WTC11 (cell line): ENCODE measurements at regions of chr18 and their contacts with region 1.

Region 1: GRCh38 chr18:9403795-9404564 is 69.4 kb downstream of the TWSG1 start:
- DNase-seq: peak; percentile 61
- ATAC-seq: peak; percentile 97
- H3K4me3 Mint-ChIP-seq: no peak overlapping the region
- H3K27ac Mint-ChIP-seq: no peak overlapping the region; the same call in 1 of the 2 replicates
- H3K4me1 Mint-ChIP-seq: no peaks in the 10 kb centered on the region
- H3K27me3 Mint-ChIP-seq: no peaks in the 10 kb centered on the region
- CTCF ChIP-seq: peak; percentile 24; the same call in 1 of the 2 replicates

Region 2: DNA sequence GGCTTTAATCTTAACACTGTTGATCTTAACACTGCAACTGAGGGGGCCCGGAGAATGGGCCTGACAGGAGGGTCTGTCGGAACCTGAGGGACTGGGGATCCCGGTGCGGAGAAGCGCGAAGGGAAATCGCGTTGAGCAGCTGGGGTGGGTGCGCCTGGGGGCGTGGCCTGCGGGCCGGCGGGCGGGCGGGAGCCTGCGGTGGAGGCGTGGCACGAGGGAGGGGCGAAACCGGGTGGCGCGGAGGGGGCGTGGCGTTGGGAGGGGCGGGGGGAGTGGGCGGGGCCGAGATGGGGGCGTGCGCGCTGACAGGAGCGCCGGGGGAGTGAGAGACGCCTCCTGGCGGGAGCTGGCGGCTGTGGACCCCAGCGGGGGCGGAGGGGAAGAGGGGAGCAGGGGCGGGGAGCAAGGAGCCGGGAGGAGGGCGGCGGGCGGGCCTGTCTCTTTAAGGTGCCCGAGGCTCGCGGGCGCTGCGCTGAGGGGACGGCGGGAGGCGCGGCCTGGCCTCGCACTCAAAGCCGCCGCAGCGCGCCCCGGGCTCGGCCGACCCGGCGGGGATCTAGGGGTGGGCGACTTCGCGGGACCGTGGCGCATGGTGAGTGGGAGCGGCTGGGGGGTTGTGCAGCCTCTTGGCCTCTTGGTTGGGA is 69.5 kb before region 1 on chr18 and contains the start of gene TWSG1:
- CTCF ChIA-PET with region 1: interaction called, 22 read pairs
- POLR2A ChIA-PET with region 1: interaction called, 5 read pairs
- DNase-seq: peak; percentile 96
- ATAC-seq: peak; percentile 92
- H3K4me3 Mint-ChIP-seq: peak within 1 kb of the TSS; percentile 86
- H3K27ac Mint-ChIP-seq: peak within 1 kb of the TSS; percentile 94
- H3K4me1 Mint-ChIP-seq: peaks cover 10% of the 10 kb centered on the region; the same call in 1 of the 2 replicates
- H3K27me3 Mint-ChIP-seq: peaks cover 27% of the 10 kb centered on the region
- CTCF ChIP-seq: 0 out of 2 replicates have a peak, but pooled peaks have one; percentile 12
- total RNA-seq, gene TWSG1: 18.2 to 19.3 TPM (median 18.3 TPM) in 3 replicates

Region 3: GRCh38 chr18:9353596-9353995 is 50.4 kb before region 1 on chr18:
- CTCF ChIA-PET with region 1: no interaction called
- POLR2A ChIA-PET with region 1: no interaction called
- DNase-seq: no peak
- ATAC-seq: no peak
- H3K4me3 Mint-ChIP-seq: no peak overlapping the region
- H3K27ac Mint-ChIP-seq: no peak overlapping the region
- H3K4me1 Mint-ChIP-seq: no peaks in the 10 kb centered on the region; the same call in none of the 2 replicates
- H3K27me3 Mint-ChIP-seq: no peaks in the 10 kb centered on the region
- CTCF ChIP-seq: no peak

Region 4: GRCh38 chr18:9366192-9366591 is 37.8 kb before region 1 on chr18:
- CTCF ChIA-PET with region 1: interaction called, 13 read pairs
- POLR2A ChIA-PET with region 1: no interaction called
- DNase-seq: peak; percentile 69
- ATAC-seq: peak; percentile 100
- H3K4me3 Mint-ChIP-seq: no peak overlapping the region
- H3K27ac Mint-ChIP-seq: peak overlapping the region; percentile 47
- H3K4me1 Mint-ChIP-seq: peaks cover 13% of the 10 kb centered on the region
- H3K27me3 Mint-ChIP-seq: no peaks in the 10 kb centered on the region
- CTCF ChIP-seq: no peak

Region 5: GRCh38 chr18:9392726-9393125 is 11.3 kb before region 1 on chr18:
- CTCF ChIA-PET with region 1: interaction called, 19 read pairs
- POLR2A ChIA-PET with region 1: no interaction called
- DNase-seq: no peak
- ATAC-seq: peak; percentile 52; the same call in 1 of the 2 replicates
- H3K4me3 Mint-ChIP-seq: no peak overlapping the region
- H3K27ac Mint-ChIP-seq: no peak overlapping the region
- H3K4me1 Mint-ChIP-seq: no peaks in the 10 kb centered on the region
- H3K27me3 Mint-ChIP-seq: no peaks in the 10 kb centered on the region
- CTCF ChIP-seq: no peak